MCF 10A (cell line): ENCODE measurements at regions of chr1 and their contacts with region 1.

Region 1: GRCh38 chr1:216221260-216221700 is 202.0 kb downstream of the USH2A start:
- DNase-seq: peak; percentile 90
- H3K4me3 Mint-ChIP-seq: peak overlapping the region; percentile 65
- H3K27ac Mint-ChIP-seq: no peak overlapping the region
- H3K4me1 Mint-ChIP-seq: no peaks in the 10 kb centered on the region
- H3K27me3 Mint-ChIP-seq: peaks cover 74% of the 10 kb centered on the region
- CTCF ChIP-seq: peak; percentile 92

Region 2: GRCh38 chr1:215710036-215710898 is 511.0 kb before region 1 on chr1:
- CTCF ChIA-PET with region 1: interaction called, 11 read pairs
- POLR2A ChIA-PET with region 1: no interaction called
- intact Hi-C with region 1: loop called (anchors 1 kb)
- DNase-seq: peak; percentile 85
- H3K4me3 Mint-ChIP-seq: no peak overlapping the region
- H3K27ac Mint-ChIP-seq: no peak overlapping the region
- H3K4me1 Mint-ChIP-seq: no peaks in the 10 kb centered on the region
- H3K27me3 Mint-ChIP-seq: peaks cover 72% of the 10 kb centered on the region
- CTCF ChIP-seq: peak; percentile 88

Region 3: GRCh38 chr1:215992620-215993019 is 228.7 kb before region 1 on chr1:
- CTCF ChIA-PET with region 1: interaction called, 8 read pairs
- POLR2A ChIA-PET with region 1: no interaction called
- intact Hi-C with region 1: loop called (anchors 1 kb)
- DNase-seq: peak; percentile 63
- H3K4me3 Mint-ChIP-seq: no peak overlapping the region
- H3K27ac Mint-ChIP-seq: no peak overlapping the region
- H3K4me1 Mint-ChIP-seq: no peaks in the 10 kb centered on the region
- H3K27me3 Mint-ChIP-seq: peaks cover 75% of the 10 kb centered on the region
- CTCF ChIP-seq: peak; percentile 69

Region 4: DNA sequence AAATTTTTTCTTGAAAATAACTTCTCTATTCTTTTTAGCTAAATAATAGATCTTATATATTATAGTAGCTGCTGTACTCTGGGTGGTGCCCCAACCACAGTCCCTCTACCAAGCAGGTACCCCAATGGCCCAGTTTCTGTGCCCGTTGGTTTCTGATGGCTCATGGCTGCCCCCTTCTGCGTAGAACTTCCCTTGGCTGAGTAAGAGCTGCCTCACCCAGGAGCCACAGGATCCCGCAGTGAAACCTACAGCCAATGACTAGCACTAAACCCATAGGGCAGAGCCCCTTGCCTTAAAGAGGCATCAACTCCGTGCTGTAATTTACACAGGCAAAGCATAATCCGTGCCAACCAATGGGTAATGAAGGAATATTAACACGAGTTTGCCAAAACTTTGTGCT is 45.6 kb before region 1 on chr1:
- CTCF ChIA-PET with region 1: interaction called, 33 read pairs
- POLR2A ChIA-PET with region 1: no interaction called
- intact Hi-C with region 1: no loop called
- DNase-seq: no peak
- H3K4me3 Mint-ChIP-seq: no peak overlapping the region
- H3K27ac Mint-ChIP-seq: no peak overlapping the region
- H3K4me1 Mint-ChIP-seq: no peaks in the 10 kb centered on the region
- H3K27me3 Mint-ChIP-seq: peaks cover 87% of the 10 kb centered on the region
- CTCF ChIP-seq: no peak

Region 5: GRCh38 chr1:216238844-216239243 is 17.6 kb after region 1 on chr1:
- CTCF ChIA-PET with region 1: interaction called, 101 read pairs
- POLR2A ChIA-PET with region 1: interaction called, 3 read pairs
- intact Hi-C with region 1: no loop called
- DNase-seq: no peak
- H3K4me3 Mint-ChIP-seq: no peak overlapping the region
- H3K27ac Mint-ChIP-seq: no peak overlapping the region
- H3K4me1 Mint-ChIP-seq: no peaks in the 10 kb centered on the region
- H3K27me3 Mint-ChIP-seq: peaks cover 92% of the 10 kb centered on the region
- CTCF ChIP-seq: no peak

Region 6: DNA sequence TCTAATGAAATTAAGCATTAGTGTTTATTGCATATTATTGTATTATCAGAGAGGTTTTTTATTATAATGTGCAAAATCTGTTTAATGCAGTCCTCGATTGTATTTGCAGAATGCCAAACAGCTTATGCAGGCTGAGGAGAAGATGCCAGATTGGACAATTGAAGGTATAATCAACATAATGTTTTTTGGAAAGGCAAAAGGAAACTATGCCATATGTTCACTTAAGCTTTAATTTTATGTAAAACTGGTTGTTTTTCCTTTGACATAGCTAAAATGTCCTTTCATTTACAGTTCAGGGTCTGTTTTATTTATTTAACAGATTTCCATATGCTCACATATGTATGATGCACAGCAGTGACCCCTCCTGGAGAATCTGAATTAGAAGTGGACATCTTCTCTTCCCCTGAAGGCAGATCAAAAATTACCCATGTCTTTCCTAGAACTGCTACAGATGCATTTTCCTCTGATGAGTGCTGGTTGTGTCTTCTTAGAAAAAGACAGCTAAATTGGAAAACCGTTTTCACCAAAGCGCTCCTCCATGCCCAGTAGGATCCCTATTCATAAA is 345.4 kb after region 1 on chr1:
- CTCF ChIA-PET with region 1: interaction called, 5 read pairs
- POLR2A ChIA-PET with region 1: no interaction called
- intact Hi-C with region 1: loop called (anchors 2 kb)
- DNase-seq: peak; percentile 58
- H3K4me3 Mint-ChIP-seq: no peak overlapping the region
- H3K27ac Mint-ChIP-seq: no peak overlapping the region
- H3K4me1 Mint-ChIP-seq: no peaks in the 10 kb centered on the region
- H3K27me3 Mint-ChIP-seq: peaks cover 93% of the 10 kb centered on the region
- CTCF ChIP-seq: peak; percentile 66

Region 7: GRCh38 chr1:216587715-216588114 is 366.4 kb after region 1 on chr1:
- CTCF ChIA-PET with region 1: no interaction called
- POLR2A ChIA-PET with region 1: no interaction called
- intact Hi-C with region 1: no loop called
- DNase-seq: no peak
- H3K4me3 Mint-ChIP-seq: no peak overlapping the region
- H3K27ac Mint-ChIP-seq: no peak overlapping the region
- H3K4me1 Mint-ChIP-seq: no peaks in the 10 kb centered on the region
- H3K27me3 Mint-ChIP-seq: peaks cover 77% of the 10 kb centered on the region
- CTCF ChIP-seq: no peak